ENCODE measurements at regions of chr17 and their contacts with region 1.

Region 1: GRCh38 chr17:67717624-67718329 is at the start of gene NOL11:
- DNase-seq: peak; percentile 99 to 100 (median 99)
- ATAC-seq: peak; percentile 94
- H3K4me3 ChIP-seq: peak within 1 kb of the TSS; percentile 93 to 98
- H3K4me3 Mint-ChIP-seq: peak within 1 kb of the TSS; percentile 99
- H3K27ac ChIP-seq: peak within 1 kb of the TSS; percentile 90 to 96
- H3K27ac Mint-ChIP-seq: peak within 1 kb of the TSS; percentile 99
- H3K4me1 ChIP-seq: peaks cover 20% of the 10 kb centered on the region
- H3K4me1 Mint-ChIP-seq: peaks cover 32% of the 10 kb centered on the region
- H3K27me3 ChIP-seq: no peaks in the 10 kb centered on the region
- H3K27me3 Mint-ChIP-seq: peaks cover 5% of the 10 kb centered on the region
- CTCF ChIP-seq: peak; percentile 72
- total RNA-seq, gene NOL11: 91.0 to 94.0 TPM

Region 2: GRCh38 chr17:67366193-67367157 is 351.3 kb before region 1 on chr17 and contains the start of gene PSMD12:
- CTCF ChIA-PET with region 1: no interaction called
- POLR2A ChIA-PET with region 1: interaction called, 3 read pairs
- intact Hi-C with region 1: loop called (anchors 1 kb)
- DNase-seq: peak; percentile 88 to 97 (median 93)
- ATAC-seq: peak; percentile 97
- H3K4me3 ChIP-seq: peak within 1 kb of the TSS; percentile 87 to 94
- H3K4me3 Mint-ChIP-seq: peak within 1 kb of the TSS; percentile 92
- H3K27ac ChIP-seq: peak within 1 kb of the TSS; percentile 86 to 95
- H3K27ac Mint-ChIP-seq: peak within 1 kb of the TSS; percentile 95
- H3K4me1 ChIP-seq: peaks cover 40% of the 10 kb centered on the region
- H3K4me1 Mint-ChIP-seq: peaks cover 43% of the 10 kb centered on the region
- H3K27me3 ChIP-seq: no peaks in the 10 kb centered on the region
- H3K27me3 Mint-ChIP-seq: no peaks in the 10 kb centered on the region
- CTCF ChIP-seq: no peak
- total RNA-seq, gene PSMD12: 52.1 to 54.9 TPM

Measured in CD8-positive, alpha-beta T cell (primary cell).